ENCODE measurements at regions of chr20 and their contacts with region 1.

Region 1: DNA sequence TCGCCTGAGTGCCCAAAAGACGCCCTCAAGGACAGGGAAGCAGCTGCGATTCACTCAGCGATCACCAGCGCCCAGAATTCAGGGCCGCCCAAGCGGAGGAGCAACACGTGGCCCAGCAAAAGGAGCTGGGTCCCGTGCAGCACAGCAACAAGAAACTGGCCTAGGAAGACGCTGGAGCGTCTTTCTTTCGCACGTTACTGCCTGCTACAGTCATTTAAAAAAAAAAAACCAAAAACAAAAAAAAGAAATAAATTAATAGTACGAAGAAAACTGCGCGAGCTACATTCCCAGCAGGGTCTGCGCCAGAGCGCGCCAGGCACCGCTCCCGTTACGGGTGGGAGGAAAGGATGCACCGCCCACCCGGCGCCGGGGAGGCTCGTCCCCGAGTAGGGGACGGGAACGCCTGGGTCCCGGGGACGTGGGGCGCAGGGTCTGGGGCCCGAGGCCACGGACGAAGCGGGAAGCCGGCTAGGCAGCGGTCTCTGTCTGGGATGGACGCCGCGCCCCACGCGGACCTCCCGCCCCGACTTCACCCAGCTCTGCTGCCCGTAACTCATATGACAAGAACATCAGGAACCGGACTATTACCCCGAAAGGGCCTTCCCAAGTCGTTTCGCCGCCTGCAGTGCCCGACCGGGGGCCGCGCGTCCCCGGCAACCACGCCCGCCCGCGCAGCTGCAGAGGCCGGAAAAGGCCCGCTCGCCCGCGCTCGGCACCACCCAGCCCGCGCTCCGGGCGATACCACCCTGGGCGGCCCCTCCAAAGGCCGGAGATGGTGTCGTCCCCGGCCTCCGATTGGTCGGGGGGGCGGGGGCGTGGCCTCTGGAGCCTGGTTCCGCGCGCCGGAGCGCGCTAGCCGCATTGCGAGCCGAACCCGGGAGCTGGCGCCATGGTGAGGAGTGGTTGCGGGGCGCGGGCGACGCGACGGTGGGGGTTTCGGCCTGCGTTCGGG is at the start of gene NOP56:
- DNase-seq: peak; percentile 89 to 100 (median 96)
- ATAC-seq: peak; percentile 98
- H3K4me3 ChIP-seq: peak within 1 kb of the TSS; percentile 82
- H3K4me3 Mint-ChIP-seq: peak within 1 kb of the TSS; percentile 87 to 92 (median 90)
- H3K27ac ChIP-seq: peak within 1 kb of the TSS; percentile 90
- H3K27ac Mint-ChIP-seq: peak within 1 kb of the TSS; percentile 85 to 94 (median 90)
- H3K4me1 ChIP-seq: peaks cover 22 to 26% of the 10 kb centered on the region in 2 donors
- H3K4me1 Mint-ChIP-seq: peaks cover 16 to 53% (median 39%) of the 10 kb centered on the region in 7 donors
- H3K27me3 ChIP-seq: no peaks in the 10 kb centered on the region
- H3K27me3 Mint-ChIP-seq: no peaks in the 10 kb centered on the region
- total RNA-seq, gene NOP56: 216 to 375 (median 287) TPM

Region 2: DNA sequence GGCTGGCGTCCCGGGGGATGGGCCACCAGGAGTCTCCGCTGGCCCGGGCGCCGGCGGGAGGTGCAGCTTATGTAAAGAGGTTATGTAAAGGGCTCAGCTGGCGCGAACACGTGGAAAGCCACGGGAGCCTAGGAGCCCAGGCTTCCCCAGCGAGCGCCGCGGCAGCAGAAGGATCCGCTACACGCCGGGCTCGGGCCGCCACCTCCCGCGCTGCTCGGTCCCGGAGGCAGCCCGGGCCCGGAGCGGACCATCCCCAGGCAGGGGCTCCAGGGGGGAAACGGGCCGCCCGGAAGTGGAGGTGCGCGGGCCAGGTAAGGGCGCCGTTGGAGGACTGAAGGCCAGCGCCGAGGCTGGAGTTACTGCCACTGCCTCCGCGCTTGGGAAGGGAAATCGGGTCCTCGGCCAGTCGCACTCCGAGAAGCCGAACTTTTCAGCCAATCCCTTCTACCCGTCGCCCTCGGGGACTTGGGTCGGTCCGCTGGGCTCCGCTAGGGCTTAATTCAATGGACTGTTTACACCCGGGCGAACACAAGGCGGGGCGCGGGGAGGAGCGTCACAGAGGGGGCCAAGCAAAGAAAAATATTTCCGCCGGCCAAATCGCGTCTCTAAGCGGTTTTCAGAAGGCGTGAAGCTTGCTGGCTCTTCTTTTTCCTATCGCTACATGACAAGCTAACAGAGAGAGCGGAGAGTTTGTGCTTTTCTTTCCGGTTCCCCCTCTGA is 550.0 kb before region 1 on chr20:
- CTCF ChIA-PET with region 1: no interaction called
- POLR2A ChIA-PET with region 1: no interaction called
- intact Hi-C with region 1: loop called in 1 of 2 experiments (anchors 2 kb)
- DNase-seq: peak; percentile 82 to 94 (median 92)
- ATAC-seq: peak; percentile 88
- H3K4me3 ChIP-seq: peak overlapping the region; percentile 88
- H3K4me3 Mint-ChIP-seq: peak overlapping the region; percentile 90 to 97 (median 96)
- H3K27ac ChIP-seq: peak overlapping the region; percentile 96
- H3K27ac Mint-ChIP-seq: peak overlapping the region; percentile 99 to 100 (median 100)
- H3K4me1 ChIP-seq: peaks cover 29 to 38% of the 10 kb centered on the region in 2 donors
- H3K4me1 Mint-ChIP-seq: peaks cover 36 to 58% (median 44%) of the 10 kb centered on the region in 7 donors
- H3K27me3 ChIP-seq: no peaks in the 10 kb centered on the region
- H3K27me3 Mint-ChIP-seq: peaks cover 0 to 4% (median 0%) of the 10 kb centered on the region in 5 donors

Region 3: GRCh38 chr20:2508631-2509467 is 143.2 kb before region 1 on chr20 and contains the start of gene ZNF343:
- CTCF ChIA-PET with region 1: no interaction called
- POLR2A ChIA-PET with region 1: interaction called, 4 read pairs
- intact Hi-C with region 1: loop called in 1 of 2 experiments (anchors 1 kb)
- DNase-seq: peak; percentile 61 to 84 (median 82)
- ATAC-seq: peak; percentile 97
- H3K4me3 ChIP-seq: peak within 1 kb of the TSS; percentile 97
- H3K4me3 Mint-ChIP-seq: peak within 1 kb of the TSS; percentile 92 to 100 (median 98)
- H3K27ac ChIP-seq: peak within 1 kb of the TSS; percentile 84
- H3K27ac Mint-ChIP-seq: peak within 1 kb of the TSS; percentile 90 to 99 (median 98)
- H3K4me1 ChIP-seq: peaks cover 6 to 7% of the 10 kb centered on the region in 2 donors
- H3K4me1 Mint-ChIP-seq: peaks cover 11 to 30% (median 25%) of the 10 kb centered on the region in 7 donors
- H3K27me3 ChIP-seq: no peaks in the 10 kb centered on the region
- H3K27me3 Mint-ChIP-seq: peaks cover 8 to 28% (median 12%) of the 10 kb centered on the region in 5 donors
- total RNA-seq, gene ZNF343: 7.5 to 14.4 (median 11.8) TPM

Region 4: GRCh38 chr20:2626853-2627541 is 25.1 kb before region 1 on chr20:
- CTCF ChIA-PET with region 1: no interaction called
- POLR2A ChIA-PET with region 1: no interaction called
- intact Hi-C with region 1: no loop called
- DNase-seq: no peak
- ATAC-seq: no peak
- H3K4me3 ChIP-seq: no peak overlapping the region
- H3K4me3 Mint-ChIP-seq: no peak overlapping the region
- H3K27ac ChIP-seq: no peak overlapping the region
- H3K27ac Mint-ChIP-seq: no peak overlapping the region
- H3K4me1 ChIP-seq: no peaks in the 10 kb centered on the region
- H3K4me1 Mint-ChIP-seq: no peaks in the 10 kb centered on the region
- H3K27me3 ChIP-seq: peaks cover 0 to 2% of the 10 kb centered on the region in 2 donors
- H3K27me3 Mint-ChIP-seq: peaks cover 26 to 35% (median 28%) of the 10 kb centered on the region in 5 donors

Region 5: GRCh38 chr20:2637246-2637645 is 14.8 kb before region 1 on chr20:
- CTCF ChIA-PET with region 1: interaction called, 9 read pairs
- POLR2A ChIA-PET with region 1: interaction called, 13 read pairs
- intact Hi-C with region 1: no loop called
- DNase-seq: no peak
- ATAC-seq: peak; percentile 51
- H3K4me3 ChIP-seq: no peak overlapping the region
- H3K4me3 Mint-ChIP-seq: no peak overlapping the region
- H3K27ac ChIP-seq: no peak overlapping the region
- H3K27ac Mint-ChIP-seq: peak overlapping the region in 1 of 9 donors; percentile 36
- H3K4me1 ChIP-seq: peaks cover 0 to 9% of the 10 kb centered on the region in 2 donors
- H3K4me1 Mint-ChIP-seq: peaks cover 0 to 11% (median 6%) of the 10 kb centered on the region in 7 donors
- H3K27me3 ChIP-seq: no peaks in the 10 kb centered on the region
- H3K27me3 Mint-ChIP-seq: peaks cover 0 to 27% (median 12%) of the 10 kb centered on the region in 5 donors

Region 6: GRCh38 chr20:2694001-2694471 is 42.0 kb after region 1 on chr20:
- CTCF ChIA-PET with region 1: no interaction called
- POLR2A ChIA-PET with region 1: no interaction called
- intact Hi-C with region 1: no loop called
- DNase-seq: no peak
- ATAC-seq: no peak
- H3K4me3 ChIP-seq: no peak overlapping the region
- H3K4me3 Mint-ChIP-seq: peak overlapping the region in 8 of 10 donors; percentile 14 to 72 (median 38)
- H3K27ac ChIP-seq: no peak overlapping the region
- H3K27ac Mint-ChIP-seq: no peak overlapping the region
- H3K4me1 ChIP-seq: no peaks in the 10 kb centered on the region
- H3K4me1 Mint-ChIP-seq: peaks cover 16 to 23% (median 18%) of the 10 kb centered on the region in 7 donors
- H3K27me3 ChIP-seq: peaks cover 4 to 9% of the 10 kb centered on the region in 2 donors
- H3K27me3 Mint-ChIP-seq: peaks cover 16 to 55% (median 23%) of the 10 kb centered on the region in 5 donors

Region 7: DNA sequence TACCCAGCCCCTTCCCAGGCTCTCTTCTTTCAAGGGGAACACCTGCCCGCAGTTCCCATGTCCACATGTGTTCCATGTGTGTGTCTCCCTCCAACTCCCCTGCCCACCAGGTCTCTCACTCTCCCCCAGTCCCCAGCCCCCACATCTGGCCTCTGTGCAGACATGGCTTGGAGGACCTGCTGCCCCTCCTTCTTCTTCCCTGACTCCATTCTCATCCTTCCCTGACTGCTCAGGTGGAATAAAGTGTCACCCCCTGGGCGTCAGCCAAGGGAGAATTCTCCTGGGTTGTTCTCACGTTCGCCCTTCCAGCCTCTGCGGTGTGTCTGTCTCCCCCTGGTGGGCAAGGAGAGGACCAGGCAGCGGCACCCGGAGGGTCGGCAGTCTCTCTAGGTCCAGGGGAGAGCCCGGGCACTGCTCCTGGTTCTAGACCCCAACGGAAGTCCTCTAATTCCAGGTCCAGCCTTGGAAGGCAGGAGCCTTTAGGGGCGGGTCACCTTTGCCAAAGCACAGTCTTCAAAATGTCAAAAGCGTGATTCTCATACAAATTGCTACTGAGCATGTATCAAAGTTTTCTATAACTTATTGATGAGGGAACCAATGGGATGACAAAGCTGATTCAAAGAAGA is 91.0 kb after region 1 on chr20:
- CTCF ChIA-PET with region 1: interaction called, 4 read pairs
- POLR2A ChIA-PET with region 1: interaction called, 21 read pairs
- intact Hi-C with region 1: no loop called
- DNase-seq: peak; percentile 51 to 84 (median 73)
- ATAC-seq: peak; percentile 75
- H3K4me3 ChIP-seq: peak overlapping the region; percentile 29
- H3K4me3 Mint-ChIP-seq: peak overlapping the region; percentile 66 to 85 (median 76)
- H3K27ac ChIP-seq: peak overlapping the region; percentile 65
- H3K27ac Mint-ChIP-seq: peak overlapping the region; percentile 87 to 99 (median 94)
- H3K4me1 ChIP-seq: peaks cover 30 to 48% of the 10 kb centered on the region in 2 donors
- H3K4me1 Mint-ChIP-seq: peaks cover 34 to 54% (median 50%) of the 10 kb centered on the region in 7 donors
- H3K27me3 ChIP-seq: no peaks in the 10 kb centered on the region
- H3K27me3 Mint-ChIP-seq: peaks cover 0 to 21% (median 0%) of the 10 kb centered on the region in 5 donors

Region 8: DNA sequence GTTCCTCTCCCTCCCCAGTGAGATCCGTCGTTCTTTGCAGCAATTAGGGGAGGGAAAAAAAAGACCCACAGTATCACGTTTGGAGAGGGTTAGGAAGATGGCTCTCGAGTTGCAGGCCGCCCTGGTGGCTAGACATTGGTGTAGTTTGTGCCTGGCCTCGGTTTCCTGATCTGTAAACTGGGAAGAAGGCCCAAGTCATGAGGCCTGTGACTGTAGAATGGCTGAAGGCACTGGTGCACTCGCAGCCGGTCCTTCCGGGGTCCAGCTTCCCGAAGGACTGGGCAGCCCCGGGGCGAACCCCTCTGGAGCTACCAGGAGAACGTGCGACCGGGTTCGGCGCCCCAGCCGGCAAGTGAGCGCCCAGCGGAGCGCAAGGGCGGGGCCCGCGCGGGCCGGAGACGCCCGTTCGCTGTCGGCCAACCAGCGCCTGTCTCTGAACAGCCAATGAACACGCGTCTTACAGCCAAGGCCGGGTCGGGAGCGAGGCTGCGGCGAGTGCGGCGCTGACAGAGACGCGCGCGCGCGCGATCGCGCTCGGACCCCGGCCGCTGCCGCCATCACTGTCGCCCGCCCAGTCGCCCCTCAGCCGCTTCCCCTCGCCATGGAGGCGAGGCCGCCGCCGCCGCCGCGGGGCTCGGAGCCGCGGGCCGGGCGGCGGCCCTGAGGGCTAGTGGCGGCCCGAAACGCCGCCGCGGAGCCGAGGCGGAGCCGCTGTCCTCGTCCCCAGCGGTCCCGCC is 221.1 kb after region 1 on chr20 and contains the start of gene PTPRA:
- CTCF ChIA-PET with region 1: no interaction called
- POLR2A ChIA-PET with region 1: interaction called, 5 read pairs
- intact Hi-C with region 1: loop called (anchors 2 kb)
- DNase-seq: peak; percentile 80 to 91 (median 88)
- ATAC-seq: peak; percentile 96
- H3K4me3 ChIP-seq: peak within 1 kb of the TSS; percentile 80
- H3K4me3 Mint-ChIP-seq: peak within 1 kb of the TSS; percentile 84 to 96 (median 94)
- H3K27ac ChIP-seq: peak within 1 kb of the TSS; percentile 71
- H3K27ac Mint-ChIP-seq: peak within 1 kb of the TSS; percentile 83 to 95 (median 90)
- H3K4me1 ChIP-seq: peaks cover 25% of the 10 kb centered on the region in 2 donors
- H3K4me1 Mint-ChIP-seq: peaks cover 31 to 47% (median 42%) of the 10 kb centered on the region in 7 donors
- H3K27me3 ChIP-seq: no peaks in the 10 kb centered on the region
- H3K27me3 Mint-ChIP-seq: no peaks in the 10 kb centered on the region
- total RNA-seq, gene PTPRA: 68.0 to 86.6 (median 81.2) TPM

Region 9: DNA sequence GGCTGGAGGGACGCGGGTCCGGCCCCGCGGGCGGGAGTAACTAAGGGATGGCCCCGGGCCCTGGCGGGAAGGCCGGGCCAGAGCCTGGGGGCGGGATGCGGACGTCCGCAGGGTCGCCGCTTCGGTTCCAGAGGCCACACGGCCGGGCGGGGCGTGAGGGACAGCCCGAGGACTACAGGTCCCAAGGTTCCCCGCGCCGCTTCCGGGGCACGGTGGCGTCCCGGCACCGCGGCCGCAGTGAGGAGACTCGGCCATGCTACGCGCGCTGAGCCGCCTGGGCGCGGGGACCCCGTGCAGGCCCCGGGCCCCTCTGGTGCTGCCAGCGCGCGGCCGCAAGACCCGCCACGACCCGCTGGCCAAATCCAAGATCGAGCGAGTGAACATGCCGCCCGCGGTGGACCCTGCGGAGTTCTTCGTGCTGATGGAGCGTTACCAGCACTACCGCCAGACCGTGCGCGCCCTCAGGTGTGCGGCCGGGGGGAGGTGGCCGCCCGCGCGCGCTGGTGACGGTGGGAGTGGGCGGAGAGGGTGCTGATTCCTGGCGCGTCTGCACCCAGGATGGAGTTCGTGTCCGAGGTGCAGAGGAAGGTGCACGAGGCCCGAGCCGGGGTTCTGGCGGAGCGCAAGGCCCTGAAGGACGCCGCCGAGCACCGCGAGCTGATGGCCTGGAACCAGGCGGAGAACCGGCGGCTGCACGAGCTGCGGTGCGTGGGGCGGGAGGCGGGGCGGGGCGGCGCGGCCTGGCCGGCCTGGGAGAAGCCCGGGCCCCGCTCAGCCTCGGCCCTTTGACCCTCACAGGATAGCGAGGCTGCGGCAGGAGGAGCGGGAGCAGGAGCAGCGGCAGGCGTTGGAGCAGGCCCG is 394.0 kb after region 1 on chr20 and contains the start of gene MRPS26:
- CTCF ChIA-PET with region 1: no interaction called
- POLR2A ChIA-PET with region 1: interaction called, 3 read pairs
- intact Hi-C with region 1: loop called in 1 of 2 experiments (anchors 5 kb)
- DNase-seq: peak; percentile 63 to 89 (median 76)
- ATAC-seq: peak; percentile 93
- H3K4me3 ChIP-seq: peak within 1 kb of the TSS; percentile 91
- H3K4me3 Mint-ChIP-seq: peak within 1 kb of the TSS; percentile 82 to 95 (median 92)
- H3K27ac ChIP-seq: peak within 1 kb of the TSS; percentile 70
- H3K27ac Mint-ChIP-seq: peak within 1 kb of the TSS; percentile 69 to 90 (median 79)
- H3K4me1 ChIP-seq: peaks cover 4 to 11% of the 10 kb centered on the region in 2 donors
- H3K4me1 Mint-ChIP-seq: peaks cover 11 to 23% (median 18%) of the 10 kb centered on the region in 7 donors
- H3K27me3 ChIP-seq: no peaks in the 10 kb centered on the region
- H3K27me3 Mint-ChIP-seq: no peaks in the 10 kb centered on the region
- total RNA-seq, gene MRPS26: 22.2 to 41.6 (median 29.5) TPM

Region 10: GRCh38 chr20:3330046-3330741 is 678.1 kb after region 1 on chr20:
- CTCF ChIA-PET with region 1: no interaction called
- POLR2A ChIA-PET with region 1: no interaction called
- intact Hi-C with region 1: no loop called
- DNase-seq: peak in 2 of 9 donors; percentile 8 to 13
- ATAC-seq: no peak
- H3K4me3 ChIP-seq: no peak overlapping the region
- H3K4me3 Mint-ChIP-seq: no peak overlapping the region
- H3K27ac ChIP-seq: no peak overlapping the region
- H3K27ac Mint-ChIP-seq: peak overlapping the region in 5 of 9 donors; percentile 18 to 81 (median 67)
- H3K4me1 ChIP-seq: peaks cover 0 to 10% of the 10 kb centered on the region in 2 donors
- H3K4me1 Mint-ChIP-seq: peaks cover 14 to 37% (median 23%) of the 10 kb centered on the region in 7 donors
- H3K27me3 ChIP-seq: no peaks in the 10 kb centered on the region
- H3K27me3 Mint-ChIP-seq: no peaks in the 10 kb centered on the region

Region 11: DNA sequence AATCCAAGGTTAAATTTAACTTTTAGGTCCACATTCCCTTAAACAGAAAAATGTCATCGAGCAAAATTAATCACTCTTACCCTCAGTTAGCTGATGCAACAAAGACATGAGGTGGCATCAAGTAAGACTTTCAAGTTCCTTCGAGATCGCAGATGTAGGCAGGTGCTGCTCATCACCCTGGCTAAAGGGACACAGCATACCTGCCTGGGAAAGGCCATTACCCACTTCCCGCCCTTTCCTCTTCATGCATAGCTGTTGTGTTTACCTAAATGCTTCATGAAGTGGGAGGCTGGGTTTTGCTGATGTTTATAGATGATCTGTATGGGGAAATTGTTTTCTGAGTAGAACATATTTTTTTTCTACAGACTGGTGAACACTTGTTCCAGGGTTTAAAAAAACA is 943.5 kb after region 1 on chr20:
- CTCF ChIA-PET with region 1: no interaction called
- POLR2A ChIA-PET with region 1: no interaction called
- intact Hi-C with region 1: no loop called
- DNase-seq: no peak
- ATAC-seq: no peak
- H3K4me3 ChIP-seq: no peak overlapping the region
- H3K4me3 Mint-ChIP-seq: no peak overlapping the region
- H3K27ac ChIP-seq: no peak overlapping the region
- H3K27ac Mint-ChIP-seq: no peak overlapping the region
- H3K4me1 ChIP-seq: no peaks in the 10 kb centered on the region
- H3K4me1 Mint-ChIP-seq: no peaks in the 10 kb centered on the region
- H3K27me3 ChIP-seq: no peaks in the 10 kb centered on the region
- H3K27me3 Mint-ChIP-seq: no peaks in the 10 kb centered on the region

Measured in naive thymus-derived CD4-positive, alpha-beta T cell (primary cell).